Astrocyte of the cerebellum (primary cell): ENCODE measurements at regions of chr3 and their contacts with region 1.

Region 1: GRCh38 chr3:116663161-116664110 is 46.1 kb upstream of the TUSC7 start:
- DNase-seq: no peak
- H3K4me3 ChIP-seq: no peak overlapping the region
- CTCF ChIP-seq: no peak

Region 2: GRCh38 chr3:116716490-116716889 is 53.1 kb after region 1 on chr3:
- in situ Hi-C with region 1: no loop called
- DNase-seq: no peak
- H3K4me3 ChIP-seq: no peak overlapping the region
- CTCF ChIP-seq: no peak

Region 3: DNA sequence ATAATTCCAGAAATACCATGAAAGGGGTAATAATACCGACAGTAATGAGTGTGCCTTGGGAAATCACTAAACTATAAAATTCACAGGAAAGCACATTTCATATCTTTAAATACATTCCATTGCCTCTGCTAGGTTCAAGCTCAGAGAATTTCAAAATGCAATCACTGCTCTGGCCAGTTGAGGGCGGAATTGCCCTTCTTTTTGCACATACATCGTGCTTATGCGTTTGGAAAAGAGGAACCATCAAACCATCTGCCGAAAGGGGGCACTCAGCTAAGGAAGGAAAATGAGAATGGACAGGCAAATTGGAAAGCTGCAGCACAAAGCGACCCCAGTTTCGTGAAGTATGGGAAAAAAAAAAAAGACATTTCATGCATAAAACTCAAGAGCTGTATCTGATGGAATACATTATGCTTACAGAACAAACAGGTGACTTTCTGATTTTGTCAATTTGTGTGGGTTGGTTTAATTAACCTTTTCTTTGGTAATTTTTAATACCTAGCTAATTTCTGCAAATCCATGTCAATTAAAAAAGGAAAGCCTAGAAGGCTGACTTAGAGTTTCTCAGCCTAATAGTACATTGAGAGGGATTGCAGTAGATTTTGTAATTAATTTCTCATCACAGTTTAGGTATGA is 107.5 kb after region 1 on chr3:
- in situ Hi-C with region 1: loop called (anchors 25 kb)
- DNase-seq: peak; percentile 68
- H3K4me3 ChIP-seq: no peak overlapping the region
- CTCF ChIP-seq: peak; percentile 97